IMR-90 (cell line): ENCODE measurements at regions of chr4 and their contacts with region 1.

Region 1: GRCh38 chr4:42519803-42520417 is 122.6 kb downstream of the SHISA3 start:
- DNase-seq: peak; percentile 48
- ATAC-seq: peak; percentile 85
- H3K4me3 ChIP-seq: no peak overlapping the region
- H3K27ac ChIP-seq: no peak overlapping the region
- H3K4me1 ChIP-seq: no peaks in the 10 kb centered on the region
- H3K27me3 ChIP-seq: no peaks in the 10 kb centered on the region; the same call in 1 of the 2 replicates
- CTCF ChIP-seq: peak; percentile 66
- POLR2A ChIP-seq: no peak
- RAD21 ChIP-seq: peak; percentile 69

Region 2: GRCh38 chr4:41887821-41888686 is 631.9 kb before region 1 on chr4:
- CTCF ChIA-PET with region 1: no interaction called
- POLR2A ChIA-PET with region 1: no interaction called
- dilution Hi-C with region 1: no loop called
- in situ Hi-C with region 1: no loop called
- intact Hi-C with region 1: loop called (anchors 2 kb)
- DNase-seq: peak; percentile 64
- ATAC-seq: no peak
- H3K4me3 ChIP-seq: no peak overlapping the region
- H3K27ac ChIP-seq: no peak overlapping the region
- H3K4me1 ChIP-seq: no peaks in the 10 kb centered on the region
- H3K27me3 ChIP-seq: peaks cover 37% of the 10 kb centered on the region
- CTCF ChIP-seq: peak; percentile 86
- POLR2A ChIP-seq: no peak
- RAD21 ChIP-seq: peak; percentile 68

Region 3: DNA sequence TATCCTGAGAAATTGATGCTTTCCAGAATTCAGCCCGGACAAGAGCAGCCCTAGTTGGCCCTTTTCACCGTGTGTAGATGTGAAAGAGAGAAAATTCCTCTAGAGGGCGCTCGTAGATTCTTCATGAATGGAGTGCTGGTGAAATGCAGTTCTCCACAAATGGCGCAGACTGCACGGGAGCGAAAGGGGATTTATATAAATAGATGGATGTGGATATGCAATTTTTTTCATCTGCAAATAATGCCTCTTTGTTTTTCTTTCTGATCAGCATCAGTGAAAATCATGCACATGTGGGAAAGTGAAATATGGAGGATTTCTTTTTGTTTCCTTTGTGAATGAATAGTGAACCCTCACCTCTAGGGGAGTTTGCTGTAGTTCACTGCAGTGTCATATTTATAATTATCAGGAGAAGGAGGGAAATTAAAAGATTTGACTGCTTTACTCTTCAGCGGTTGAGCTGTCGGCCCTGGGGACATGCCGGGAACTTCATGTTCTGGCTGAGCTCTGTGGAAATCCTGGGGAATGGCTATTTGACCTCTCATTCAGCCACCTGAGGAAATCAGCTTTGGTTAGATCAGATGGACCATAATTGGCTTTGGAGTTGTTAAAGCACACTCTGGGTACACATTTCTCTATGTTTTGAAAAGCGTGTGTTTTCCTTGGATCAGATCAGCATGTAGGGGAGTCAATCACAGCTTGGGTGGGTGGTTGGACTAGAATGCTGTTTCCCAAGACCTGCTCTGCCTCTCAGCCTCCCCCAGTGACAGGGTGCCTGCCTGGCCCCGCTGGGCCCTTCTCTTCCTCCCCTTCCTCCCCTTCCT is 237.6 kb before region 1 on chr4:
- CTCF ChIA-PET with region 1: interaction called, 7 read pairs
- POLR2A ChIA-PET with region 1: no interaction called
- dilution Hi-C with region 1: no loop called
- in situ Hi-C with region 1: loop called (anchors 5 kb)
- intact Hi-C with region 1: loop called (anchors 1 kb)
- DNase-seq: peak; percentile 68
- ATAC-seq: peak; percentile 95
- H3K4me3 ChIP-seq: no peak overlapping the region
- H3K27ac ChIP-seq: peak overlapping the region; percentile 4; the same call in 1 of the 2 replicates
- H3K4me1 ChIP-seq: no peaks in the 10 kb centered on the region; the same call in 1 of the 2 replicates
- H3K27me3 ChIP-seq: no peaks in the 10 kb centered on the region
- CTCF ChIP-seq: peak; percentile 75
- POLR2A ChIP-seq: no peak
- RAD21 ChIP-seq: peak; percentile 74

Region 4: DNA sequence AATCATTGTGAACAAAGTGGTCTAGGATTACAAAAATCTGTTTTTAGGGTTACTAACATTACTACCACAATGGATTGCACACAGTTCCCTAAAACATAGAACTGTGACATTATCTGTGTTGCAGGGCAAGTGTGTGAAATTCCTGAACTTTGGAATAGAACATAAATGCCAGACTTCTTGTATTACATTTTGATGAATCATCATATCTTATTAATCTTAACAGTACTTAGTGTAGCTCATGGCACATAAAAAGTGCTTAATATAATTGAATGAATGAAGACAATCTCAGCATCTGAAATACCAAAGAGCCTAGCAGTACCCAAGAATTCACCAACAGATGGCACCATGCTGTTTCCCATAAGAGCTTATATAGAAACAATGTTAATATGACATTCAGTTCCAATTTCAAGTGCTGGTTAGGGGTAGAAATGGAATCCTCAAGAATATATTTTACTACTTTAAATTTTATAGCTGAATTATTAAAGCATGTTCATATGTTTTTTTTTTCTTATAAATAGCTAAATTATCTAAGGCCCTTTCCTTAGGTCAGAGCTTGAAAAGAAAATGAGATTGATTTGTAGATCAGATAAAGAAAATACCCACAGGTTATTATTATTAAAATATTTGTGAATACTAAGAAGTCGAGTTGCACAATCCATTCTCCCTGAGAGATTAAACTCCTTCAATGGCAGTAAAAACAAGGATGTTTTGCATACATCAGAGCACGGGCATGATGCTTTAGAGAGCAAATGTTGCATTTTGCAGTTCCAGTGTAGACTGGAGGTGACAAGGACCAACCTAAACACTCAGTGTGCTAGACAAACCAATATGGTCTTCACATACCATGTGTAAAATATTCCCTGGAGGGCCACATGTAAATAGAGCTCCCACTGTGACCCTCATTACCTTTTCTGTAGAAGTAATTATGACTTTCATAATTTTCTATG is 148.3 kb before region 1 on chr4:
- CTCF ChIA-PET with region 1: interaction called, 46 read pairs
- POLR2A ChIA-PET with region 1: no interaction called
- dilution Hi-C with region 1: no loop called
- in situ Hi-C with region 1: loop called (anchors 5 kb)
- intact Hi-C with region 1: loop called (anchors 1 kb)
- DNase-seq: peak; percentile 60
- ATAC-seq: peak; percentile 66
- H3K4me3 ChIP-seq: no peak overlapping the region
- H3K27ac ChIP-seq: no peak overlapping the region; the same call in 1 of the 2 replicates
- H3K4me1 ChIP-seq: no peaks in the 10 kb centered on the region; the same call in 1 of the 2 replicates
- H3K27me3 ChIP-seq: no peaks in the 10 kb centered on the region
- CTCF ChIP-seq: peak; percentile 70
- POLR2A ChIP-seq: no peak
- RAD21 ChIP-seq: peak; percentile 69

Region 5: DNA sequence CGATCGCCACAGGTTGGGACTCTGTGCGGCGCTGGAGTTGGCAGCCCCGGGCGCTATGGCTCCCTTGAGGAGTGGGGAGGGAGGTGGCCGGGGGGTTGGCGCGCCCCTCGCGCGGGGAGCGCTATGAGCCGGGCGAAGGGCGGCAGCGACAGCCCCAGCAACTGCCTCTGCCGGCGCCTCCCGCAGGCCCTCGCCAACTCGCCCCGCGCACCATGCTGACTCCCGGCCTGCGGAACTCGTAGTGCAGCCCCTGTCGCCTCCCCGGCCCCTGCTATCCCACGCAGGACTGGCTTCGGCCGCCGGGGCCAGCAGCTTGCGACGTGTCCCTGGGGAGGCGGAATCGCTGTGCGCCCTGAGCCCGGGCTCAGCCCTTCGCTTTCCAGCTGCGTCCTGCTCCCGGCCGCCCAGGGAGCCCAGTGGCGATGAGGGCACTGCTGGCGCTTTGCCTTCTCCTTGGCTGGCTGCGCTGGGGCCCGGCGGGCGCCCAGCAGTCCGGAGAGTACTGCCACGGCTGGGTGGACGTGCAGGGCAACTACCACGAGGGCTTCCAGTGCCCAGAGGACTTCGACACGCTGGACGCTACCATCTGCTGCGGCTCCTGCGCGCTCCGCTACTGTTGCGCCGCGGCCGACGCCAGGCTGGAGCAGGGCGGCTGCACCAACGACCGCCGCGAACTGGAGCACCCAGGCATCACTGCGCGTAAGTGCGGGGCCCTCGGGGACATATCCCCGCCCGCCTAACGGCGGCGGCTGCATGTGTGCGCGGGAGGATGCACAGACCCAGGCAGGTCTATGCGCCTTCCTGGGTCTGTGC is 122.1 kb before region 1 on chr4:
- CTCF ChIA-PET with region 1: interaction called, 3 read pairs
- POLR2A ChIA-PET with region 1: no interaction called
- dilution Hi-C with region 1: no loop called
- in situ Hi-C with region 1: no loop called
- intact Hi-C with region 1: loop called (anchors 2 kb)
- DNase-seq: peak; percentile 12
- ATAC-seq: peak; percentile 53
- H3K4me3 ChIP-seq: peak overlapping the region; percentile 78
- H3K27ac ChIP-seq: peak overlapping the region; percentile 28
- H3K4me1 ChIP-seq: no peaks in the 10 kb centered on the region
- H3K27me3 ChIP-seq: peaks cover 2% of the 10 kb centered on the region; the same call in 1 of the 2 replicates
- CTCF ChIP-seq: no peak
- POLR2A ChIP-seq: no peak
- RAD21 ChIP-seq: no peak

Region 6: GRCh38 chr4:43325220-43325967 is 805.5 kb after region 1 on chr4:
- CTCF ChIA-PET with region 1: no interaction called
- POLR2A ChIA-PET with region 1: no interaction called
- dilution Hi-C with region 1: no loop called
- in situ Hi-C with region 1: no loop called
- intact Hi-C with region 1: no loop called
- DNase-seq: peak; percentile 44
- ATAC-seq: peak; percentile 53
- H3K4me3 ChIP-seq: no peak overlapping the region
- H3K27ac ChIP-seq: no peak overlapping the region; the same call in 1 of the 2 replicates
- H3K4me1 ChIP-seq: peaks cover 2% of the 10 kb centered on the region; the same call in 1 of the 2 replicates
- H3K27me3 ChIP-seq: no peaks in the 10 kb centered on the region
- CTCF ChIP-seq: no peak
- POLR2A ChIP-seq: no peak
- RAD21 ChIP-seq: no peak